ENCODE measurements at regions of chr4 and their contacts with region 1.

Region 1: DNA sequence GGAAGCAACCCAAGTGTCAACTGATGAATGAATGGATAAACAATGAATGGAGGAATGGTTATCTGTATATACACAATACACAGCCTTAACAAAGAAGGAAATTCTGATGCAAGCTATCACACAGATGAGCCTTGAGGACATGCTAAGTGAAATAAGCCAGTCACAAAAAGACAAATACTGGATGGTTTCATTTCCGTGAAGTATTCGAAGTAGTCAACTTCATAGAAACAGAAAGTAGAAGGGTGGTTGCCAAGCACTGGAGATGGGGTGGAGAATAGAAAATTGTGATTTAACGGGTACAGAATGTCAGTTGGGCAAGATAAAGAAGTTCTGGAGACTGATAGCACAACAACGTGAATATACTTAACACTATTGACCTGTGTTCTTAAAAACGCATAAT is 28.2 kb downstream of the CENPU start:
- DNase-seq: no peak

Region 2: DNA sequence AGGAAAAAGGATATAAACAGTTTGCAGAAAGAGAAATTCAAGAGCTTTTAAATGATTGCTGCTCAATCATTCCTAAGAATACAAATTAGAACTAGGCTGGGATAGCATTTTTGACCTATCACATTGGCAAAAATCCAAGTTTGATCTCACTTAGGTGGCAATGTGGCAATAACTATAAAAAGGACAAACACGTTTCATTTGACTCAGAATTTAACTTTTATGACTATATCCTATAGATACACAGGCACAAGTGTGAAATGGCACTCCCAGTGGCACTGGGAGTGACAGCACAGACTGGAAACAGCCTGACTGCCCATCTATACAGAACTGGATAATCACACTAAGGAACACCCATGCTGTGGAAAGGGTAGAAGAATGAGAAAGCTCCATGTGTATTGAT is 17.1 kb after region 1 on chr4:
- CTCF ChIA-PET with region 1: interaction called, 10 read pairs
- POLR2A ChIA-PET with region 1: no interaction called
- DNase-seq: no peak

Measured in HEK293T (cell line).